Endothelial cell of umbilical vein (primary cell): ENCODE measurements at regions of chr7 and their contacts with region 1.

Region 1: DNA sequence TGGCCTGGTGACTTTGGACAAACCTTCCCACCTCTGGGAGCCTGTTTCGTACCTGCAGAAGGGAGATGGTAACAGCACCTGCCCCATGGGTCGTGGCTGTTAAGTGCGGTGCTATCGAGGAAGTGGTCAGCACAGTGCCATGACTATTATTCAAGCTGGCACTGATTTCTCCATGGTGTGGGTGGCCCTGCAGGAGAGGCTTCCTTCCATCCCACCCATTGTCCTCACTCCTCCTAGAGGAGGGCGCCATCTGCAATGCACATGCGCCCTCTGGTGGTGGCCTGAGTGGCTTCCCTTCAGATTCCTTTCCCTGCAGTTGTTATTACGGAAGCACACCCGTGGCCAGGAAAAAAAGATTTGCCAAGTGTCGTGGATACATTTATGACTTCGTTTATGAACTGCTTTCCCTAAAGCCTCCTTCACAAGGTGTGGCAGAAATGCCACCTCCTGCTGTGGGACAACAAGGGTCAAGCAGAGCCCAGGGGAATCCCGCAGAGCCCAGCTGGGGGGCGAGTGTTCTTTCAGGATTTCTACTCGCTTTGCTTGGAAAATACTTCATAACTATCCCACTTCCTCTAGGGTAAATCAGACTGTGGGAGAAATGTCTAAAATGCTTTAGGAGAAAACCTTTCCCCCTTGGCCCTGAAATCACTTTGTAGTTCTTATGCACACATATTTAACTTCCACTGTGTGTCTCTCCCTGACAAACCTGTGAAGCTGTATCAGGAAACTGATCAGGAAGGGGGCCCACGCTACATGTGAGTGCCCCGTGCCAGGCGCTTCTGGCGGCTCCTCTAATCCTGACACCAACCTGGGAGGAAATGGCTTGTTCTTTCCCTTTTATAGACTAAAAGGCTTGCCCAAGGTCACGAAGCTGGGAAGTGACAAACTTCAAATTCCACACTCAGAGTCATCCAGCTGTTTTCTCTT is 98.0 kb upstream of the ANLN start:
- DNase-seq: peak; percentile 87
- H3K4me3 ChIP-seq: peak overlapping the region; percentile 10 to 51 (median 19)
- H3K27ac ChIP-seq: peak overlapping the region; percentile 57
- H3K4me1 ChIP-seq: peaks cover 7% of the 10 kb centered on the region
- H3K27me3 ChIP-seq: no peaks in the 10 kb centered on the region
- CTCF ChIP-seq: peak; percentile 92 to 96
- POLR2A ChIP-seq: no peak

Region 2: DNA sequence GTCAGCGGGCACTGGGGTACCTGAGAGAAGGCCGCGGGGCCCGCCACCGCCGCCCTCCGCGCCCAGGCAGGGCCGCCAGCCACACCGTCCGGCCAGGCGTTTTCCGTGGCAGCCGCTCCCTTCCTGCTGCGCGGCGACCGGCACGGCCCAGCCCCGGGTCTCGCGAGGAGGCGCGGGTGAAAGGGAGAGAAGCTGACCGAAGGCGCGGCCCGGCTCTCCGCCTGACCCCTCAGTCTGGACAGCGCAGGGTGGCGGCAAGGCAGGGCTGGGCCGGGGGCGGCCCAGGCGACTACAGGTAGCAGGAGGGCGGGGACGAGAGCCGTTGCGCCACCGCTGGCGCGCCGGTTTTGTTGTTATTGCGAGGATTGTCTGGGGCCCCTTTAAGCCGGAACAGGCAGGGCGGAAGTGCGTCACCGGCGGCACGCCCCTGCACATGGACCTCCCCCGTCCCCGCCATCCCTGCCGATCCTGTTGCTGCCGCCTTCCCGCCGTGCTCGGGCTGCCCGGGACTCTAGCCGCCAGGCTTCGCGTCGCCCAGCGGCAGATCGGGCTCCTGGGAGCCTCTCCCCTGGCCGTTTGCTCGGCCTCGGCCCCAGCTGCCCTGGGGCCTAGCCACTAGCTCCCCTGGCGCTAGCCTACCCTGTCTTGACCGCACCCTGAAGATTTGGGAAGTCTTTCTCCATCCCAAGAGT is 596.7 kb before region 1 on chr7 and contains the start of gene HERPUD2:
- CTCF ChIA-PET with region 1: no interaction called
- POLR2A ChIA-PET with region 1: no interaction called
- dilution Hi-C with region 1: no loop called
- intact Hi-C with region 1: loop called (anchors 10 kb)
- DNase-seq: peak; percentile 91
- H3K4me3 ChIP-seq: peak within 1 kb of the TSS; percentile 53 to 81 (median 73)
- H3K27ac ChIP-seq: peak within 1 kb of the TSS; percentile 83
- H3K4me1 ChIP-seq: peaks cover 47% of the 10 kb centered on the region
- H3K27me3 ChIP-seq: no peaks in the 10 kb centered on the region
- CTCF ChIP-seq: no peak
- POLR2A ChIP-seq: peak; percentile 94
- total RNA-seq, gene HERPUD2: 27.7 and 33.9 TPM in 2 replicates

Region 3: DNA sequence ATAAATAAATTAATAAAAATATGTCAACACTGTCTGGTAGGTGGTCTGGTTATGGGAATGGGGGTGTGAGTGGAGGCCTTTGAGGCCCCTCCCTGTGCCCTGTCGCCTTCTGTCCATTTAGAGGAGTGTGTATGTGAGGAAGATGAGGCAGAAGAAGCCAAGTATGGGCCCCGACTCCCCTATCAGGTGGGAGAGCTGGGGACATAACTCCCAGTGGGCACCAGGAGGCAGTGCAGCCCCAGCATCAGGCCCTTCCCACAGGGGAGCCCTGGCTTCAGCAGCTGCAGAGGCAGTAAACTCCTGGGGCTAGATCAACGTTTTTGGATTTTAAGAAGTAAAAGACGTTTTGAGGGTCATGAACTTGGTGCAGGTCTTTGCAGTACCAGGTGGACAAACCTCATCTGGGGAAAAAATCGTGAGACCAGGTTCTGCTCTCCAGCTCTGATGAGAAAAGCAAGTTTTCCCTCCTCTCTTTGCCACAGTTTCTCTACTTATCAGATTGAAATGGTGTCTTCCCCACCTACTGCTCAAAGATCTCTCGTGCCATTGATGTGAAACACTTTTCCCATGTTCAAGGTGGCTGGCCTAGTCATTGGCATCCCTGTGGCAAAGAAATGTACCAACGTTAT is 306.4 kb before region 1 on chr7:
- CTCF ChIA-PET with region 1: interaction called, 203 read pairs
- POLR2A ChIA-PET with region 1: no interaction called
- dilution Hi-C with region 1: no loop called
- intact Hi-C with region 1: loop called (anchors 1 kb)
- DNase-seq: peak; percentile 67
- H3K4me3 ChIP-seq: no peak overlapping the region
- H3K27ac ChIP-seq: no peak overlapping the region
- H3K4me1 ChIP-seq: no peaks in the 10 kb centered on the region
- H3K27me3 ChIP-seq: no peaks in the 10 kb centered on the region
- CTCF ChIP-seq: peak; percentile 87 to 90
- POLR2A ChIP-seq: no peak

Region 4: DNA sequence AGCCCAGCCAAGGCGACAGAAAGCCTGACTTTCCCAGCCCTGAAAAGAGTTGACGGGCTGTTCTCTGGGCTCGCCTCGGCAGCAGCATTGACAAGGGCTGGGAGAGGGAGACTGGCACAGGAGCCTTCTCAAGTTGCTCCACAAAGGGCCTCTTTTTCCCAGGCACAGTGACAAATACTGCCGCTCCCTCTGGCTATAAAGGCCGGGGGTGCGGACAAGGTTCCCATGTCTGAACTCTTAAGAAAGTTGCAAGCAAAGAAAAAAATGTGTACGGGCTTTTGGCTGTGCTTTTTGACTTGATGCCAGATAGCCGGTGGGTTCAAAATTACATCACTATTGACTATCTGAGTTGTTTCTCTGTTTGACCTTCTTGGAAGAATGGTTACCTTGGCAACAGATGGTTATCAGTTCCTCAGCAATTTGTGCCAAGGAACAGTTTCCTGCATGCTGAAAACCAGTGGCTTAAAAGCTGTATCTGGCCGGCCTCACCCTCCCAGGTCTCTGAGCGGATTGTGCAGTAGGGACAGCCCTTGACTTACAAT is 254.5 kb before region 1 on chr7:
- CTCF ChIA-PET with region 1: interaction called, 6 read pairs
- POLR2A ChIA-PET with region 1: no interaction called
- dilution Hi-C with region 1: no loop called
- intact Hi-C with region 1: loop called (anchors 1 kb)
- DNase-seq: peak; percentile 98
- H3K4me3 ChIP-seq: peak overlapping the region in 1 of 3 experiments; percentile 9
- H3K27ac ChIP-seq: peak overlapping the region; percentile 78
- H3K4me1 ChIP-seq: peaks cover 41% of the 10 kb centered on the region
- H3K27me3 ChIP-seq: peaks cover 7 to 10% of the 10 kb centered on the region in 2 experiments
- CTCF ChIP-seq: no peak
- POLR2A ChIP-seq: no peak

Region 5: DNA sequence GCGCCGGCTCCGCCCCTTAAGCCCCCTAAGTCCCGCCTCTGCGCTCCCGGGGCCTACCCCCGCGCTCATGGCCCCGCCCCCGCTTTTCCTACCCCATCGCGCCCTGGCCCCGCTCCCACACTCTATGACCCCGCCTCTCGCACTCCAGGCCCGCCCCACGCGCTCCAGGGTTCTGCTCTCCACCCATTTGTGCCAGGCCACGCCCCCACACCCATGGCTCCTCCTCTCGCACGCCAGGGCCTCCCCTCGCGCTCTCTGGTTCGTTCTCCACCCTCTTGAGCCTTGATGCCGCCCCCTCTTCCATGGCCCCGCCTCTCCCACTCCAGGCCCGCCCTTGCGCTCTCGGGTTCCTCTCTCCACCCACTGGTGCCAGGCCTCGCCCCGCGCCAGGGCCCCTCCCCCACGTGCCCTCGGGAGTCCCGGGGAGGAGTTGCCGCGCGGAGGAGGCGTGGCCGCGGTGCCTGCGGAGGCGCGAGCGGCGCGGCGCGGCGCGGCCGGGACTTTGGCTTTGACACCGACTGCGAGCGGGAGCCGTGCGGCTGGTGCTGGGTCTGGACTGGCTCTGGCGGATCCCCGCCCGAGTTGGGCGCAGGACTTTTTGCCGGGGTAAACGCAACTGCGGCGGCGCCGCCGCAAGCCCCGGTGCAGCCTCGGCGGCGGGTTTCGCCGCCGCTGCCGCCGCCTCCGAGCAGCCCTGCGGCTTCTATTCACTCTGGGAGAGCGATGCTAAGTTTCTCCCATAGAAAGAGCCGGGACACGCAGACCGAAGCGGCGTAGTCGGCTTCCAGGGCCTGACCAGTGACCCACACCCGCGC is 138.7 kb before region 1 on chr7 and contains the start of gene EEPD1:
- CTCF ChIA-PET with region 1: no interaction called
- POLR2A ChIA-PET with region 1: no interaction called
- dilution Hi-C with region 1: no loop called
- intact Hi-C with region 1: loop called (anchors 1 kb)
- DNase-seq: peak; percentile 99
- H3K4me3 ChIP-seq: peak within 1 kb of the TSS; percentile 51 to 60 (median 57)
- H3K27ac ChIP-seq: no peak within 1 kb of the TSS
- H3K4me1 ChIP-seq: peaks cover 4% of the 10 kb centered on the region
- H3K27me3 ChIP-seq: peaks cover 0 to 3% of the 10 kb centered on the region in 2 experiments
- CTCF ChIP-seq: no peak
- POLR2A ChIP-seq: no peak
- total RNA-seq, gene EEPD1: 0.23 and 0.42 TPM in 2 replicates

Region 6: GRCh38 chr7:36315309-36316133 is 23.9 kb after region 1 on chr7:
- CTCF ChIA-PET with region 1: interaction called, 115 read pairs
- POLR2A ChIA-PET with region 1: no interaction called
- dilution Hi-C with region 1: no loop called
- intact Hi-C with region 1: loop called (anchors 1 kb)
- DNase-seq: no peak
- H3K4me3 ChIP-seq: no peak overlapping the region
- H3K27ac ChIP-seq: no peak overlapping the region
- H3K4me1 ChIP-seq: peaks cover 5% of the 10 kb centered on the region
- H3K27me3 ChIP-seq: peaks cover 0 to 3% of the 10 kb centered on the region in 2 experiments
- CTCF ChIP-seq: no peak
- POLR2A ChIP-seq: no peak

Region 7: DNA sequence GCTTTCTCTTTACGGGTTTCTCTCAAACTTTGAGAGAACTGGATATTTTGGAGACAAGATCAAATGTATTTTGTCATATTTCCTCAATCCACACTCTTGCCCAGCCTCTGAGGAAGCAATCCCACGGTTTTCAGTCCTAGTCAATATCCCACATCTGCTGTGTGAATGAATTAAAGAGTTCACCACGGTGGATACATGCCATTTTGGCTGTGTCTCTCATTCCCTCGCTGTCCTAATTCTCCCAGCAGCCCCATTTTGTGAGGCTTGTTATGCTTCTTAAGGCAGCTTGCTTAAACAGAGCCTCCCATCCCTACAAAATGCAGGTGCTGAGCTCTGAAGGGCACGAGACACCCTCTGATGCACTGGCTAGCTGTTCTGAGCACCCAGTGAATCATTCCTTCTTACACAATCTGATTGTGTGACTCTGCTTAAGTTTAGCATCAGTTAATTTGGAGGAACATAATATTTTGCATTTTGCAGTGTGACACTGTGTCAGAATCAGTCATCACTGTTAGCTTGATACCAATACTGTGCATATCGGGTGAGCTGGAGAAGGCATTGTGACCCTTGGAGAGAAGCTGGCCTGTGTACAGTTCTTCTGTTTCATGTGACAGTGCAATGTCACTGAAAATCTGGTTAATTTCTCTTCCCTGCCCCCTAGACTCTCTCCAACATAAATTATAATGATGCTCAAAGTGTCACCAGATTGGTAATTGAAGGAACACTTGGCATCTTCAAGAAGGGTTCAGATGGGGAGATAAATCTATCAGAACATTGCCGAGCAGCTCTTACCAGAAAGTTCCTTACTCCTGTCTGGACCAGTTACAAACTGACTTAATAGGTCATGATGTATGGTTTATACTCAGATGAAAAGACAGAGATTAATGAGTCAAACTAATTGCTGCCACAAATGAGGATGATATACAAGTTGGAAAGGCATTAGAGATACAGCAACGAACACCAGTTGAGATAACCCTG is 536.4 kb after region 1 on chr7:
- CTCF ChIA-PET with region 1: no interaction called
- POLR2A ChIA-PET with region 1: no interaction called
- dilution Hi-C with region 1: no loop called
- intact Hi-C with region 1: no loop called
- DNase-seq: no peak
- H3K4me3 ChIP-seq: no peak overlapping the region
- H3K27ac ChIP-seq: no peak overlapping the region
- H3K4me1 ChIP-seq: no peaks in the 10 kb centered on the region
- H3K27me3 ChIP-seq: no peaks in the 10 kb centered on the region
- CTCF ChIP-seq: no peak
- POLR2A ChIP-seq: no peak